PC-9 (cell line): ENCODE measurements at regions of chr16 and their contacts with region 1.

Region 1: DNA sequence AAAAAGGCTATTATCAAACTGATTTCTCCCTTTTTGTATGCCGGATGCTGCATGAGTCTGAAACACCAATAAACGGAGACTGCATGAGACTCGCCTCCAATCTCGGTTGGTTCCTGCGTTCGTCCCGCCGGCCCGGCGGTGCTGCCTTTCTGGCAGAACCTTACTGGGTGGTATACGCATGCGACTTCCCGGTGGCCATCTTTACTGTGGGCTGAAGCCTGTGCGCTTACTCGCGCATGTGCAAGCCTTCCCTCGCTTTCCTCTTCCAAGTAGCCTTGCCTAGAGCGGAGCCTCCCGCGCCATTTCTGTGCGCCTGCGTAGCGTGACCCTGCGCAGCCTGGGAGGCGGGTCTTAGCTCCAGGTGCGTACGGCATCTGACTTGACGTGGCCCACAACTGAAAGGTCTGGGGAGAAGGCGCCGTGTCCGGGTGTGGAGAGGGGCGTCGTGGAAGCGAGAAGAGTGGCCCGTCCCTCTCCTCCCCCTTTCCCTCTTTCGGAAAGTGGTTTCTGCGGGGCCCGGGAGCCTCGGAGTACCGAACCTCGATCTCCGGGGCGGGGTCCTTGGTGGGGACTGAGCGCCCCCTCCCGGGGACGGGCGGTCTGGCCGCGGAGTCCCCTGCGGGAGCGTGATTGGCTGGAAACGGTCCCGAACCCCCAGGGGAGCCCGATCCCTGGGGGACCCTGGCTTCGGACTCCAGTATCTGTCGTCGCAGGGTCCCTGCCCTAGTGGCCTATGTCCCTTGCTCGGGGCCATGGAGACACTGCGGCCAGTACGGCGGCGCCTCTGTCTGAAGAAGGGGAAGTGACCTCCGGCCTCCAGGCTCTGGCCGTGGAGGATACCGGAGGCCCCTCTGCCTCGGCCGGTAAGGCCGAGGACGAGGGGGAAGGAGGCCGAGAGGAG is at the start of gene PAGR1:
- DNase-seq: peak; percentile 98 to 100
- H3K4me3 ChIP-seq: peak within 1 kb of the TSS; percentile 83
- H3K27ac ChIP-seq: peak within 1 kb of the TSS; percentile 55
- H3K4me1 ChIP-seq: peaks cover 44% of the 10 kb centered on the region
- H3K27me3 ChIP-seq: no peaks in the 10 kb centered on the region
- CTCF ChIP-seq: peak; percentile 94
- total RNA-seq, gene PAGR1: 27.5 and 44.6 TPM in 2 replicates

Region 2: GRCh38 chr16:28291873-28292660 is 1524.0 kb before region 1 on chr16 and contains the start of gene SBK1:
- CTCF ChIA-PET with region 1: interaction called, 15 read pairs
- POLR2A ChIA-PET with region 1: no interaction called
- intact Hi-C with region 1: no loop called
- DNase-seq: peak; percentile 64 to 94
- H3K4me3 ChIP-seq: peak within 1 kb of the TSS; percentile 62
- H3K27ac ChIP-seq: no peak within 1 kb of the TSS
- H3K4me1 ChIP-seq: 0 out of 2 replicates have a peak, but pooled peaks cover 6% of the 10 kb centered on the region
- H3K27me3 ChIP-seq: peaks cover 19% of the 10 kb centered on the region; the same call in 1 of the 2 replicates
- CTCF ChIP-seq: no peak
- total RNA-seq, gene SBK1: 18.4 and 22.1 TPM in 2 replicates

Region 3: DNA sequence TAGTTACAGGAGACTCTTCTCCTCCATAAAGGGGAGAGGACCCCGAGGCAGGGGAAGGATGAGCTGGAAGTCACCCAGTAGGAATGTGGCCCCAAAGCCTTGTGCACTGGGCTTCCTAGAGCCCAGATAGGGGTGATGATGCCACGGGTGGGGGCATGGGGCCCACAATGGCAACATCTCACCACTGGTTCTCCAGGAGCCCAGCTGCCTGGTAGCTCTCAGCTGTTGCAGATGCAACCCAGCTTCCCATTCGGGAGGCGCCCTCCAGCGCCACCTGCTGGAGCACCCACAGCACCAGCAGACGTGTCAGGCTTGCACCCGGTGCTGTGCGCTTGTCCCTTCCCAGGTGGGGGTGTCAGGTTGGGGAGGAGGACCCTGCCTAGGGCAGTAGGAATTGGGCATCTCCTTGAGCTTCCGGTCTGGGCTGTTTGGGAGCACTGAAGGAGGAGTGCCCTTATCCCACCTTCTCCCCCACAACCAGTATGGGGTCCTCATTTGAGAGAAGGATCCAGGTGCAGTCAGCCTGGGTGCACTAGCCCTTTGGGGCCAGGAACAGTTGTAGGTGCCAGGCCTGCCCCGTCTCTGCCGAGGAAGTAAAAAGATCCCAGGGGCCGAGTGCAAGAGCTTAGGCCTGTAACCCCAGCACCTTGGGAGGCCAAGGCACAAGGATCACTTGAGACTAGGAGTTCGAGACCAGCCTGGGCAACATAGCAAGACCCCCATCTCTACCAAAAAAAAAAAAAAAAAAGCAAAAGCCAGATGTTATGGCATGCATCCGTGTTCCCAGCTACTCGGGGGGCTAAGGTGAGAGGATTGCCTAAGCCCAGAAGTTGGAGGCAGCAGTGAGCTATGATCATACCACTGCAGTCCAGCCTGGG is 32.6 kb after region 1 on chr16:
- CTCF ChIA-PET with region 1: interaction called, 18 read pairs
- POLR2A ChIA-PET with region 1: no interaction called
- intact Hi-C with region 1: loop called (anchors 1 kb)
- DNase-seq: peak in 1 of 2 experiments; percentile 75
- H3K4me3 ChIP-seq: no peak overlapping the region
- H3K27ac ChIP-seq: no peak overlapping the region
- H3K4me1 ChIP-seq: no peaks in the 10 kb centered on the region
- H3K27me3 ChIP-seq: no peaks in the 10 kb centered on the region
- CTCF ChIP-seq: peak; percentile 90

Region 4: DNA sequence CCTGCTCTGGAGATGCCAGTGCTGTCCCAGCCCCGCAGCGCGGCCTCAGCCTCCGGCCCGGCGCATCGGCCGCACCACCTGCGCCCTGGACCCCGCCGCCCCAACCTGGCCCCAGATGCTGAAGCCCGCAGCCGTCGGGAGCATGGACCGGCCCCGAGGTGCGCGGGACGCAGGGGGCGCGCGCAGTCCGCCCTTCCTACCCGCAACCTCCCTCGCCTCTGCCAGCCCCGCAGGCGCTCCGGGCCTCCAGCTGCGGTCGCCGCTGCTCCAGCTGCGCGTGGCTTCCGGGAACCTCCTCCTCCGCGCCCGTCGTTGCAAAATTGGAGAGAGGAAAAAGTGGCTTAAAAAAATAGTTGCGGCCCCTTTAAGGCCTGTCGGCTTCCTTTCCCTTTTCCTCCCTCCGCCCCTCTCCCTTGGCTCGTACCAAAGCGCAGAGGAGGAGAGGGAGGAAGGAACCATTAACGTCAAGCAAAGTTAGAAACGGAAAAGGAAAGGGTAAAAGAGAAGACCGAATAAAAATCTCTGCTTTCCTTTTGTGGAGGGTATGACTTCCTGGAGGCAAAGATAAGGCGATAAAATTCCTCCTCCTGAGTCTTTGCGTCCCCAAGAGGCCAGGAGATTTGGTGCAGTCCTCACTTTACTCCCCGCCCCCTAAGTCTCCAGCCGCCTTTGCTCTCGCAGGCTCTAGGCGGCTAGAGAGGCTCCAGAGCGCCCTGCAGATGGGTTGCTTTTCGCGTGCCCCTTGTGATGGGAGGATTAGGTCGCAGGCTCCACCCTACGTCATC is 47.0 kb after region 1 on chr16 and contains the start of gene CDIPT:
- CTCF ChIA-PET with region 1: interaction called, 3 read pairs
- POLR2A ChIA-PET with region 1: interaction called, 15 read pairs
- intact Hi-C with region 1: loop called (anchors 2 kb)
- DNase-seq: peak; percentile 93 to 97
- H3K4me3 ChIP-seq: peak within 1 kb of the TSS; percentile 78
- H3K27ac ChIP-seq: peak within 1 kb of the TSS; percentile 81
- H3K4me1 ChIP-seq: peaks cover 10% of the 10 kb centered on the region
- H3K27me3 ChIP-seq: no peaks in the 10 kb centered on the region
- CTCF ChIP-seq: 0 out of 2 replicates have a peak, but pooled peaks have one; percentile 35
- total RNA-seq, gene CDIPT: 90.6 and 133 TPM in 2 replicates

Region 5: GRCh38 chr16:29995911-29996772 is 180.1 kb after region 1 on chr16 and contains the start of gene INO80E:
- CTCF ChIA-PET with region 1: no interaction called
- POLR2A ChIA-PET with region 1: no interaction called
- intact Hi-C with region 1: loop called (anchors 2 kb)
- DNase-seq: peak; percentile 91 to 100
- H3K4me3 ChIP-seq: peak within 1 kb of the TSS; percentile 72
- H3K27ac ChIP-seq: peak within 1 kb of the TSS; percentile 74
- H3K4me1 ChIP-seq: peaks cover 25% of the 10 kb centered on the region
- H3K27me3 ChIP-seq: no peaks in the 10 kb centered on the region
- CTCF ChIP-seq: no peak
- total RNA-seq, gene INO80E: 102 TPM in 2 replicates

Region 6: GRCh38 chr16:30551781-30552180 is 735.7 kb after region 1 on chr16:
- CTCF ChIA-PET with region 1: no interaction called
- POLR2A ChIA-PET with region 1: interaction called, 10 read pairs
- intact Hi-C with region 1: no loop called
- DNase-seq: no peak
- H3K4me3 ChIP-seq: no peak overlapping the region
- H3K27ac ChIP-seq: no peak overlapping the region
- H3K4me1 ChIP-seq: peaks cover 2% of the 10 kb centered on the region; the same call in 1 of the 2 replicates
- H3K27me3 ChIP-seq: no peaks in the 10 kb centered on the region
- CTCF ChIP-seq: no peak